ENCODE measurements at regions of chr9 and their contacts with region 1.

Region 1: DNA sequence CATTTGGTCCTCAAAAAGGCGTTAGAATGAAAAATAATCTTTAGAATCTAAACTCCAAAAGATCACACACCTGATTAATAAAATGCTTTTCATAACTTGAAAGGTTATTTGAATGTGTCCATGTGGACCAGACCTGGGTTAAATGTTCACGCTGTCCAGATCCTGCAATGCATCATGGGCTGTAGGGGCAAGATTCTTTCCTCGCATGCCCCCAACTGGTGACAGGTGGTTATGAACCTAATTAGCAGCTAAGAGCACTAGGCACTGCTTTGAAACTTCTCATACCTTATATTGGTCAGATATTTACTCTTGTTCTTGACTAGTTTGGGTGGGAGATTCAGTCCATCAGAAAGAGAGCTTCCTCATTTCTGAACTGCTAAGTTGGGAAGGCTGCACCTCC is 19.3 kb upstream of the PIP5K1B start:
- DNase-seq: peak; percentile 73
- ATAC-seq: peak; percentile 93
- H3K4me3 ChIP-seq: no peak overlapping the region
- H3K4me3 Mint-ChIP-seq: no peak overlapping the region
- H3K27ac ChIP-seq: no peak overlapping the region
- H3K27ac Mint-ChIP-seq: no peak overlapping the region
- H3K4me1 ChIP-seq: peaks cover 32 to 40% of the 10 kb centered on the region in 2 donors
- H3K4me1 Mint-ChIP-seq: peaks cover 27% of the 10 kb centered on the region
- H3K27me3 ChIP-seq: peaks cover 0 to 5% (median 0%) of the 10 kb centered on the region in 4 experiments
- H3K27me3 Mint-ChIP-seq: no peaks in the 10 kb centered on the region
- CTCF ChIP-seq: peak; percentile 74

Region 2: GRCh38 chr9:68643901-68644809 is 41.6 kb before region 1 on chr9:
- CTCF ChIA-PET with region 1: interaction called, 20 read pairs
- POLR2A ChIA-PET with region 1: no interaction called
- intact Hi-C with region 1: loop called (anchors 1 kb)
- DNase-seq: peak; percentile 83
- ATAC-seq: peak; percentile 61
- H3K4me3 ChIP-seq: peak overlapping the region in 1 of 5 experiments; percentile 42
- H3K4me3 Mint-ChIP-seq: peak overlapping the region; percentile 70
- H3K27ac ChIP-seq: peak overlapping the region; percentile 91 to 97
- H3K27ac Mint-ChIP-seq: peak overlapping the region; percentile 91
- H3K4me1 ChIP-seq: peaks cover 83 to 91% of the 10 kb centered on the region in 2 donors
- H3K4me1 Mint-ChIP-seq: peaks cover 89% of the 10 kb centered on the region
- H3K27me3 ChIP-seq: no peaks in the 10 kb centered on the region
- H3K27me3 Mint-ChIP-seq: no peaks in the 10 kb centered on the region
- CTCF ChIP-seq: no peak

Region 3: GRCh38 chr9:68669218-68669617 is 16.6 kb before region 1 on chr9:
- CTCF ChIA-PET with region 1: interaction called, 19 read pairs
- POLR2A ChIA-PET with region 1: no interaction called
- intact Hi-C with region 1: no loop called
- DNase-seq: no peak
- ATAC-seq: no peak
- H3K4me3 ChIP-seq: no peak overlapping the region
- H3K4me3 Mint-ChIP-seq: no peak overlapping the region
- H3K27ac ChIP-seq: no peak overlapping the region
- H3K27ac Mint-ChIP-seq: no peak overlapping the region
- H3K4me1 ChIP-seq: peaks cover 2 to 6% of the 10 kb centered on the region in 2 donors
- H3K4me1 Mint-ChIP-seq: peaks cover 5% of the 10 kb centered on the region
- H3K27me3 ChIP-seq: no peaks in the 10 kb centered on the region
- H3K27me3 Mint-ChIP-seq: no peaks in the 10 kb centered on the region
- CTCF ChIP-seq: no peak

Region 4: DNA sequence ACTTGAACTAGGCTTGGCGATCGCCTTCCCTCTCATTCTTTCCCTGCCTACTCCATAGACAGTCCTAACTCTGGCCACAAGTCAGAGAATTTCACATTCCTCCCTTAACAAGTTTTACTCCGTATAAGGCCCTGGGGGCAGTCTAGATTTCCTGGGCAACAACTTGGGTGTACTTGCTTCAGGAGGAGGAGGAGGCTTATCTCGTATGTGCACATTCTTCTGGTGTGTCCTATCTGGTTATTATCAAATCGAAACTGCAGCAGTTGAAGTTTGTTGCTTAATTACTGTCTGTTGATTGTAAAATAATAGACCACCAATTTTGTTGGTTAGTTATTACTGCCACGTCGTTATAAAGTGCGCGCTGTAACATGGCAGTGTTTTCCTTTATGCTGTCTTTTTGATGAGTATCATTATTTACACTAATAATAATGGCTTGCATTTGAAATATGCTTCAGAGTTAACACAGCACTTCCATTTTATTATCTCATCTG is 61.3 kb after region 1 on chr9:
- CTCF ChIA-PET with region 1: no interaction called
- POLR2A ChIA-PET with region 1: no interaction called
- intact Hi-C with region 1: no loop called
- DNase-seq: no peak
- ATAC-seq: no peak
- H3K4me3 ChIP-seq: no peak overlapping the region
- H3K4me3 Mint-ChIP-seq: no peak overlapping the region
- H3K27ac ChIP-seq: no peak overlapping the region
- H3K27ac Mint-ChIP-seq: no peak overlapping the region
- H3K4me1 ChIP-seq: no peaks in the 10 kb centered on the region
- H3K4me1 Mint-ChIP-seq: peaks cover 22% of the 10 kb centered on the region
- H3K27me3 ChIP-seq: no peaks in the 10 kb centered on the region
- H3K27me3 Mint-ChIP-seq: no peaks in the 10 kb centered on the region
- CTCF ChIP-seq: no peak

Region 5: GRCh38 chr9:68844631-68845612 is 159.2 kb after region 1 on chr9:
- CTCF ChIA-PET with region 1: interaction called, 11 read pairs
- POLR2A ChIA-PET with region 1: no interaction called
- intact Hi-C with region 1: no loop called
- DNase-seq: peak; percentile 55
- ATAC-seq: peak; percentile 53
- H3K4me3 ChIP-seq: no peak overlapping the region
- H3K4me3 Mint-ChIP-seq: no peak overlapping the region
- H3K27ac ChIP-seq: no peak overlapping the region
- H3K27ac Mint-ChIP-seq: no peak overlapping the region
- H3K4me1 ChIP-seq: peaks cover 9 to 12% of the 10 kb centered on the region in 2 donors
- H3K4me1 Mint-ChIP-seq: peaks cover 27% of the 10 kb centered on the region
- H3K27me3 ChIP-seq: no peaks in the 10 kb centered on the region
- H3K27me3 Mint-ChIP-seq: no peaks in the 10 kb centered on the region
- CTCF ChIP-seq: peak; percentile 58

Region 6: DNA sequence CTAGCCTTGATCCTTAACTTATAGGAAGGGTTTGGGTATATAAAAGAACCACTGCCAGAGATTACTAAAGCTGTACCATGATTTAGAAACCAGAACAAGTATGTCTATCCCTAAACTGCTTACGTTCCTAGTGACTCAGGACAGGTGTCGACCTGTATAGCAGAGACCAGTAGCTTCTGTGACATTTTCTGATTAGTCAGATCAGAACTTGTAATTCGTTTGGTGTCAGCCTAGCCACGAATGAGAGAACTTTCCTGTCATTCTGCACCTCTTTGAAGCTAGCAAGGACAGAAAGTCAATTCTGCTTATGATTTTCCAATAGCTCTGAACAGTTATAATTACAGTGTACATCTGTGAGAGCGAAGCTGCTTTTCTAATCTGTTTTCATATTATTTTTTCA is 288.7 kb after region 1 on chr9:
- CTCF ChIA-PET with region 1: no interaction called
- POLR2A ChIA-PET with region 1: no interaction called
- intact Hi-C with region 1: no loop called
- DNase-seq: no peak
- ATAC-seq: no peak
- H3K4me3 ChIP-seq: no peak overlapping the region
- H3K4me3 Mint-ChIP-seq: no peak overlapping the region
- H3K27ac ChIP-seq: peak overlapping the region in 1 of 2 donors; percentile 12
- H3K27ac Mint-ChIP-seq: no peak overlapping the region
- H3K4me1 ChIP-seq: peaks cover 26 to 32% of the 10 kb centered on the region in 2 donors
- H3K4me1 Mint-ChIP-seq: peaks cover 43% of the 10 kb centered on the region
- H3K27me3 ChIP-seq: no peaks in the 10 kb centered on the region
- H3K27me3 Mint-ChIP-seq: no peaks in the 10 kb centered on the region
- CTCF ChIP-seq: no peak

Region 7: DNA sequence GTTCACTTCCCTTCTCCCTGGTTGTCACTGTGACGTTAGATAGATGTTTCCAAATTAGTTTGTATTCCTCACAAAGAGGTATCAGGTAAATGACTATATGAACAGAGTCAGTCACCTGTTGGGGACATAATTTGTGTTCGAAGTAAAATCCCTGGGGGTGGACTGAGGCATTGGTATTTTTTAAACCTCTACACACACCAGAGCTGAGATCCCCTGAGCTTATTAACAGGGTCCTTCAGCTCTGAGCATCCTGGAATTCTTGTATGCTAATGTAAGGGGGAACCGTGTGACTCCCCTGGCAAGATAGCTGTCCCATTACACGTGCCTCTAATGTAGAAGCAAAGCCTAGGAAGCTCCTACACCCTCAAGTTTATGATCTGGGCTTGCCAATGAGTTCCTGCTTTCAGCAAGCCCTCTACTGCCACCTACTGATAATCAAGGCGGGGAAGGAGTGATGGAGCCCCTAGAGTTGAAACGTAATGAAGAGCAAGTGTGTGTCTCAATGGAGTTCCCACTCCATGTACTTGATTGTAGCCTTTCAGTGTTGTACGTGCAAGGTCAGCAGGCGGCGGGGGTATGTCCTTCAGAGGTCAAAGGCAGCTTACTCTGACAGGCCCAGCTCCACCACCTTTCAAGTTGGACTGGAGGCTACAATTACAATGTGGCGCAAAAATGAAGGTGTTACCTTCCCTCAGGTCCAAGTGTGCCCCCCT is 313.8 kb after region 1 on chr9:
- CTCF ChIA-PET with region 1: interaction called, 26 read pairs
- POLR2A ChIA-PET with region 1: no interaction called
- intact Hi-C with region 1: loop called (anchors 1 kb)
- DNase-seq: peak; percentile 74
- ATAC-seq: peak; percentile 92
- H3K4me3 ChIP-seq: no peak overlapping the region
- H3K4me3 Mint-ChIP-seq: no peak overlapping the region
- H3K27ac ChIP-seq: no peak overlapping the region
- H3K27ac Mint-ChIP-seq: peak overlapping the region; percentile 16
- H3K4me1 ChIP-seq: peaks cover 0 to 7% of the 10 kb centered on the region in 2 donors
- H3K4me1 Mint-ChIP-seq: peaks cover 21% of the 10 kb centered on the region
- H3K27me3 ChIP-seq: no peaks in the 10 kb centered on the region
- H3K27me3 Mint-ChIP-seq: no peaks in the 10 kb centered on the region
- CTCF ChIP-seq: peak; percentile 82

Region 8: GRCh38 chr9:69027355-69028096 is 341.8 kb after region 1 on chr9:
- CTCF ChIA-PET with region 1: interaction called, 4 read pairs
- POLR2A ChIA-PET with region 1: no interaction called
- intact Hi-C with region 1: loop called (anchors 10 kb)
- DNase-seq: peak; percentile 68
- ATAC-seq: peak; percentile 87
- H3K4me3 ChIP-seq: no peak overlapping the region
- H3K4me3 Mint-ChIP-seq: no peak overlapping the region
- H3K27ac ChIP-seq: no peak overlapping the region
- H3K27ac Mint-ChIP-seq: no peak overlapping the region
- H3K4me1 ChIP-seq: peaks cover 5% of the 10 kb centered on the region in 2 donors
- H3K4me1 Mint-ChIP-seq: peaks cover 7% of the 10 kb centered on the region
- H3K27me3 ChIP-seq: no peaks in the 10 kb centered on the region
- H3K27me3 Mint-ChIP-seq: no peaks in the 10 kb centered on the region
- CTCF ChIP-seq: peak; percentile 89

Region 9: GRCh38 chr9:69532396-69532795 is 846.6 kb after region 1 on chr9:
- CTCF ChIA-PET with region 1: no interaction called
- POLR2A ChIA-PET with region 1: no interaction called
- intact Hi-C with region 1: no loop called
- DNase-seq: no peak
- ATAC-seq: no peak
- H3K4me3 ChIP-seq: no peak overlapping the region
- H3K4me3 Mint-ChIP-seq: no peak overlapping the region
- H3K27ac ChIP-seq: no peak overlapping the region
- H3K27ac Mint-ChIP-seq: no peak overlapping the region
- H3K4me1 ChIP-seq: no peaks in the 10 kb centered on the region
- H3K4me1 Mint-ChIP-seq: no peaks in the 10 kb centered on the region
- H3K27me3 ChIP-seq: peaks cover 0 to 2% (median 0%) of the 10 kb centered on the region in 4 experiments
- H3K27me3 Mint-ChIP-seq: peaks cover 7% of the 10 kb centered on the region
- CTCF ChIP-seq: no peak